WTC11 (cell line): ENCODE measurements at regions of chr9 and their contacts with region 1.

Region 1: DNA sequence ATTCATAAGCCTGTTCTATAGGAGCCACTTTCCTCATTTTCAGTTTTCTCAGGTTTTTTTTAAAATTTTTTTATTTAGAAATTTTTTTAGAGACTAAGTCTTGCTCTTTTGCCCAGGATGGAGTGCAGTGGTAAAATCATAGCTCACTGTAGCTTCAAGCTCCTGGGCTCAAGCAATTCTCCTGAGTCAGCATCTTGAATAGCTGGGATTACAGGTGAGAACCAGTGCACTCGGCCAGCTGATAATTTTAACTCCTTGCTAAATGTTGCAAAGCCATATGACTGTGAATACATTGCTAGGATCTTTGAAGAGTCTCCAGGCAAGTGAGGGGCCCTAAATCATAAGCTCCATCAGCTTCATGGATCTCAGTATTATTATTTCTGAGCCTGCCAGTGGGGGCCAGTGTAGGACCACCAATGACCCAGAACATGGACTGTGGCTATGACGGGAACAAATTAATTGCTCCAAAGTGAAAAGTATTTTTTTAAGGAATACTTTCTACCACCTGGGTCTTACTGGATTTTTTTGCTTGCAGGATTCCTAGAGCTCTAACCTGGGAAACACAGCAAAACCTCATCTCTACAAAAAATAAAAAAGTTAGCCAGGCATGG is 5.7 kb upstream of the GAPVD1 start:
- DNase-seq: peak; percentile 32
- ATAC-seq: peak; percentile 76
- H3K4me3 Mint-ChIP-seq: no peak overlapping the region
- H3K27ac Mint-ChIP-seq: no peak overlapping the region
- H3K4me1 Mint-ChIP-seq: peaks cover 2% of the 10 kb centered on the region; the same call in 1 of the 2 replicates
- H3K27me3 Mint-ChIP-seq: no peaks in the 10 kb centered on the region
- CTCF ChIP-seq: no peak

Region 2: DNA sequence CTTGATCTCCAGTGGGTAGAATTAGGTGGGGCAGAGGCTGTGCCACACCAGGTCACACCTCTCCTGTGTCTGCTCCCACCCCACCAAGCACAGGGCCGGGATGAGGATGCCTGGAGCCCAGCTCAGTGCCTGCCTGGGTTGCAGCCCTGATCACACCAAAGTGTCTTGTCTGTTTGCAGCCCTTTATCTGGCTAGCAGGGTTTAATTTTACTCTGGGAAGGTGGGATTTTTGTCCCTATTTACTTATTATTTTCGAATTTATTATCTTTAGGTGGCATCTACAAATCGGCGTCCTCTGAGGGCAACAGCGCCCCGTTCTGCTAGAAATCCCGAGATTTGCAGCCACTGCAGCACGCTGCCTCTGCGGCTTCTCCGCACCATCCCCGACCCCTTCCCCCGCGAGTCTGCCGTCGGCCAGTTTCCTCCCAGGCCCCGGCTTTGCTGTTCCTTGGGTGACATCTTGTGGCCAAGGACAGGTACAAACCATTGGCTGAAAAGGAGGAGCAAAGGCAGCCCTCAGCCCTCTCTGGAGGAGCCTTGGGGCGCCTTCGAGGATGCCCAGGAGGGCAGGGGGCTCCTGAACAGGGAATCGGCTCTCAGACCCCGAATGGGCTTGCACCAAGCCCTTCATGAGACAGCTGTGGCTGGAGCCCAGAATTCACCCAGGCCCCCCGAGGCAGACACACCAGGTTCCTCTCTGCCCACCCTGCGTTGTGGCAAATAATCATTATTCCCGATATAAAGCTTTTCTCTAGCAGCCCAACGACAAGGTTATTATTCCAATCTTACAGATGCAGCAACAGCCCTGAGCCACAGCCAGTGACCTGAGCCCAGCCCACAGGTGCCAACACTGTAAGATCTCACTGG is 118.8 kb after region 1 on chr9:
- CTCF ChIA-PET with region 1: interaction called, 21 read pairs
- POLR2A ChIA-PET with region 1: no interaction called
- DNase-seq: peak; percentile 86
- ATAC-seq: peak; percentile 90
- H3K4me3 Mint-ChIP-seq: peak overlapping the region; percentile 56
- H3K27ac Mint-ChIP-seq: no peak overlapping the region
- H3K4me1 Mint-ChIP-seq: peaks cover 24% of the 10 kb centered on the region
- H3K27me3 Mint-ChIP-seq: peaks cover 4% of the 10 kb centered on the region; the same call in 1 of the 2 replicates
- CTCF ChIP-seq: peak; percentile 73